SK-N-SH (cell line): ENCODE measurements at regions of chr1 and their contacts with region 1.

Region 1: GRCh38 chr1:110060034-110060661 is 10.3 kb downstream of the ALX3 start:
- DNase-seq: no peak
- H3K4me3 ChIP-seq: no peak overlapping the region; a peak in 1 of 4 replicates
- H3K27ac ChIP-seq: peak overlapping the region in 1 of 2 experiments; percentile 93; a peak in 2 of 4 replicates
- H3K4me1 ChIP-seq: peaks cover 42 to 97% of the 10 kb centered on the region in 2 experiments
- H3K27me3 ChIP-seq: no peaks in the 10 kb centered on the region
- CTCF ChIP-seq: peak; percentile 81
- EP300 ChIP-seq: no peak
- RAD21 ChIP-seq: no peak

Region 2: DNA sequence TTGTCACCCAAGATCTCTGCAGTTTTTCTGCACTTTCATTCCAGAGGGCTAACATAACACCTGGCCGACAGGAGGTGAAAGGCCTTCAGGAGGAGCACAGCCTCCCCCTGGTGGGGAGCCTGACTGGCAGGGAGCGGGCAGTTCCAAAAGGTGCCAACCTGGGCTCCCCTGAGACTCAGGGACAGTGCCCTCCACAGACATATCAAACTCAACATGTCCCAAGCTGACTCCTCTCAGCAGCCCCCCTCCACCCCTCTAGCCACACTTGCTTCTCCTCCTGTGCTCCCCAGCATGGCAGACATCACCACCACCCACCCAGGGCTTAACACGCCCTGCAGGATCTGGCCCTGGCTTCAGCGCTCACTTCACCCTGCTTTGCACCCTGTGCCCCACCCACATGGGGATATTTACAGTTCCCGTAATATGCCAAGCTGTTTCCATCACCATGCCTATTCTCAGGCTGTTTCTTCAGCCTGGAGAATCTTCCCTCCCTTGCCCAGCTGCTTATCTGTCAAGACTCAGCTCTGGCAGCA is 79.3 kb before region 1 on chr1:
- CTCF ChIA-PET with region 1: no interaction called
- POLR2A ChIA-PET with region 1: no interaction called
- DNase-seq: peak; percentile 30
- H3K4me3 ChIP-seq: no peak overlapping the region
- H3K27ac ChIP-seq: no peak overlapping the region
- H3K4me1 ChIP-seq: peaks cover 8 to 11% of the 10 kb centered on the region in 2 experiments; a peak in 2 of 4 replicates
- H3K27me3 ChIP-seq: no peaks in the 10 kb centered on the region
- CTCF ChIP-seq: peak; percentile 58
- EP300 ChIP-seq: no peak
- RAD21 ChIP-seq: peak; percentile 59

Region 3: DNA sequence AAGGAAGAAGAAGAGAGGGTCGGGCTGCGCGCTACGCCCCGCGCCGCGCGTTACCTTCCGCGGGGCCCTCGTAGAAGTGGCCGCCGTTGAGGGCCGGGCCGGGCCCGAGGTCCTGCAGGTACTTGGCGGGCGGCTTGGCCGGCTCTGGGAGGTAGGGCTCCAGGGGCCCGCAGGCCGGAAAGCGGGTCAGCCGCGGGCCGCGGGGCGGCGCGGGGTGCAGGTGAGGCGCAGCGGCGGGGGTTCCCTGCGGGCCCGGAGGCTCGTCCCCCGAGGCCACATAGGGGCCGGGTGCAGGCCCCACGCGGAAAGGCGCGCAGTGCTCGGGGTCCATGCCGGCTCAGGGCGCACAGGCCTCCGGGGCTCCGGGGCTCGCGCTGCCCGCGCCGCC is 10.1 kb after region 1 on chr1:
- CTCF ChIA-PET with region 1: interaction called, 1,768 read pairs
- POLR2A ChIA-PET with region 1: interaction called, 3 read pairs
- DNase-seq: no peak
- H3K4me3 ChIP-seq: no peak overlapping the region
- H3K27ac ChIP-seq: no peak overlapping the region
- H3K4me1 ChIP-seq: peaks cover 0 to 12% of the 10 kb centered on the region in 2 experiments; a peak in 2 of 4 replicates
- H3K27me3 ChIP-seq: no peaks in the 10 kb centered on the region; the same call in 1 of the 2 replicates
- CTCF ChIP-seq: no peak
- EP300 ChIP-seq: no peak
- RAD21 ChIP-seq: no peak